Activated naive CD4-positive, alpha-beta T cell treated with anti-CD3 and anti-CD28 coated beads for 36 hours (primary cell): ENCODE measurements at regions of chr19 and their contacts with region 1.

Region 1: GRCh38 chr19:49640113-49640898 is at the start of gene RRAS:
- DNase-seq: peak; percentile 100
- H3K4me3 Mint-ChIP-seq: peak within 1 kb of the TSS; percentile 99
- H3K27ac Mint-ChIP-seq: peak within 1 kb of the TSS; percentile 99
- H3K4me1 Mint-ChIP-seq: peaks cover 43% of the 10 kb centered on the region
- H3K27me3 Mint-ChIP-seq: no peaks in the 10 kb centered on the region
- total RNA-seq, gene RRAS: 7.2 to 7.8 TPM

Region 2: GRCh38 chr19:48965040-48965805 is 675.1 kb before region 1 on chr19 and contains the start of gene FTL:
- CTCF ChIA-PET with region 1: no interaction called
- intact Hi-C with region 1: loop called (anchors 1 kb)
- DNase-seq: peak; percentile 93
- H3K4me3 Mint-ChIP-seq: peak within 1 kb of the TSS; percentile 100
- H3K27ac Mint-ChIP-seq: peak within 1 kb of the TSS; percentile 97
- H3K4me1 Mint-ChIP-seq: peaks cover 56% of the 10 kb centered on the region
- H3K27me3 Mint-ChIP-seq: no peaks in the 10 kb centered on the region
- total RNA-seq, gene FTL: 1,093 to 1,120 TPM

Region 3: GRCh38 chr19:49315111-49315510 is 325.2 kb before region 1 on chr19:
- CTCF ChIA-PET with region 1: no interaction called
- intact Hi-C with region 1: no loop called
- DNase-seq: no peak
- H3K4me3 Mint-ChIP-seq: no peak overlapping the region
- H3K27ac Mint-ChIP-seq: no peak overlapping the region
- H3K4me1 Mint-ChIP-seq: peaks cover 9% of the 10 kb centered on the region
- H3K27me3 Mint-ChIP-seq: no peaks in the 10 kb centered on the region

Region 4: GRCh38 chr19:49497047-49497788 is 143.1 kb before region 1 on chr19:
- CTCF ChIA-PET with region 1: no interaction called
- intact Hi-C with region 1: loop called (anchors 1 kb)
- DNase-seq: peak; percentile 79
- H3K4me3 Mint-ChIP-seq: peak overlapping the region; percentile 87
- H3K27ac Mint-ChIP-seq: peak overlapping the region; percentile 96
- H3K4me1 Mint-ChIP-seq: peaks cover 49% of the 10 kb centered on the region
- H3K27me3 Mint-ChIP-seq: no peaks in the 10 kb centered on the region

Region 5: DNA sequence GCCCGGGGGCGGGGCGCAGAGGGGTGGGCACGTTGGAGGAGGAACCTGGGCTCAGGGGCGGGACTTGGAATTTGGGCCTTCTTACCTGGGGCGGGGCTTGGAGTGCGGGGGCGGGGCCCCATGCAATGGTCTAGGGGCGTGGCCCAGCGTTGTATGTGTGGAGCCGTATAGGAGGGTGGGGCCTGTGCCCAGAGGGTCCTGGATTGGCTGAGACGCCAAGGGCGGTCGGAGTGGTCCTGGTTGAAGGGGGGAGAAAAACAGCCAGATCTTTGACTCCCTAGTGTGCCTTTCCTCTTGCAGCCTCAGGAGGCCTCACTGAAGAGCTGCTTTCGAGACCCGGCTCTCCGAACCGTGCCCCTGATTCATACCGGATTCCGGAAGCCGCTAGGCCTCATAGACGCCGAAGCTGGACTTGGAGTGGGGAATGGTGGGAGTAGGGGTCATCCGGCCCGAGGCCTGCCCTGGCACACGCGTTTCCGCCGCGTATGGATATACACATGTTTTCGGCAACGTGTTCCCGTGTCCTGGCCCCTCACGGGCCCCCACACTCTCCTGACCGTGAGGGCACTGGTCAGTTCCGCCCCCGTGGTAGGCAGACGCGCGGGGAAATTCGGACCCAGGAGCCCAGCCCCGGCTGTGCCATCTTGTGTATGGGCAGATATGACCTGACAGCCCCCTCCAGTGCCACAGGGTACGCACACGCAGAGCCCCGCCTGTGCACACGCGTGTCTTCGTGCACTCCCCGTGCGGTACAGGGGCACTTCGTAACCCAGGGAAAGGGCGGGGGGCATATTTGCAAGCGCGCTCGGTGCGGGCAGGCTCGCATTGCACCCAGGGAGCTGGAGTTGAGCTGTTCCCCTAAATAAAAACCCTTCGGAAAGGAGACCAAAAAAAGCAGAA is 50.0 kb before region 1 on chr19:
- CTCF ChIA-PET with region 1: interaction called, 5 read pairs
- intact Hi-C with region 1: loop called (anchors 1 kb)
- DNase-seq: peak; percentile 96
- H3K4me3 Mint-ChIP-seq: peak overlapping the region; percentile 77
- H3K27ac Mint-ChIP-seq: peak overlapping the region; percentile 85
- H3K4me1 Mint-ChIP-seq: peaks cover 25% of the 10 kb centered on the region
- H3K27me3 Mint-ChIP-seq: no peaks in the 10 kb centered on the region

Region 6: GRCh38 chr19:49766007-49766937 is 126.0 kb after region 1 on chr19:
- CTCF ChIA-PET with region 1: no interaction called
- intact Hi-C with region 1: loop called (anchors 1 kb)
- DNase-seq: peak; percentile 100
- H3K4me3 Mint-ChIP-seq: peak overlapping the region; percentile 94
- H3K27ac Mint-ChIP-seq: peak overlapping the region; percentile 92
- H3K4me1 Mint-ChIP-seq: peaks cover 30% of the 10 kb centered on the region
- H3K27me3 Mint-ChIP-seq: no peaks in the 10 kb centered on the region

Region 7: DNA sequence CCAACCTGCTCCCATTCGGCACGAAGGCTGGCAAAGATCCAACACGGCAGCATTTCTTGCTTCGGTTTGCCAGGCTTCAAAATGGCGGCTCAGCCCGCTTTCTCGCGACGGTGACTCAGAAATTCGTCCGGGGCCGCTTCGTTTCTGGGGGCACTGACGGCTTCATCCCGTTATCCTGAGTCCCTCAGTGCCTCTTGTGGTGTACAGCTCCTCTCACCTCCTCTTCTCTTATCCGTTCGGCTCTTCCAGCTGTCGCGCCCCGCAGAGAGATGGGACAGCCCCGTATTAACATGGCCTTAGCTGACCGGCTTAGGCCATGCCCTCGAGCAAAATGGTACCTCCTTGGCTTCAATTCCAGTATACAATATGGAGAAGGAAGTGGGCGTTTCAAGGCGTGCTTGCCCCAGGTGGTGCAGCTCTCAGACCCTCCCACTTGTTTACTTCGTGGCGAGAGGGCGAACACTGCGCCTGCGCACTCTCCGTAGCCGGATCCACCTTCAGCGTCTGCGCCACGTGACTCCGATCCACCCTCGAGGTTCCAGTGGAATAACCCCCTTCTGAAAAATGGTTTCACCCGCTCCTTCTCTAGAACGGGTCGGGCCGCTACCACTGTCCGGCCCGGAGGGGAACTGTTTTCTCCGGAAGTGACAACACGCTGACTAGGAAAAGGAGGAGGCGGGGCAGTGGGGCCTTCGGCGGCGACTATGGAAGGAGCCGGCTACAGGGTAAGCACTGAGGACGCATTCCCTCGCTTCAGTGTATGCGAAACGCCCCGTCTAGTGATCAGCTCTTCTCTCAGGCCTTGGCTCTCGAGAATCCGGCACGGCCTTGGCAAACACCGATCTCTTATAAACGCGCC is 236.9 kb after region 1 on chr19 and contains the starts of genes AKT1S1 and TBC1D17:
- CTCF ChIA-PET with region 1: no interaction called
- intact Hi-C with region 1: loop called (anchors 1 kb)
- DNase-seq: peak; percentile 99
- H3K4me3 Mint-ChIP-seq: no peak within 1 kb of the TSS
- H3K27ac Mint-ChIP-seq: no peak within 1 kb of the TSS
- H3K4me1 Mint-ChIP-seq: peaks cover 28% of the 10 kb centered on the region
- H3K27me3 Mint-ChIP-seq: no peaks in the 10 kb centered on the region
- total RNA-seq, gene AKT1S1: 13.3 to 14.2 TPM
- total RNA-seq, gene TBC1D17: 29.8 to 32.4 TPM

Region 8: DNA sequence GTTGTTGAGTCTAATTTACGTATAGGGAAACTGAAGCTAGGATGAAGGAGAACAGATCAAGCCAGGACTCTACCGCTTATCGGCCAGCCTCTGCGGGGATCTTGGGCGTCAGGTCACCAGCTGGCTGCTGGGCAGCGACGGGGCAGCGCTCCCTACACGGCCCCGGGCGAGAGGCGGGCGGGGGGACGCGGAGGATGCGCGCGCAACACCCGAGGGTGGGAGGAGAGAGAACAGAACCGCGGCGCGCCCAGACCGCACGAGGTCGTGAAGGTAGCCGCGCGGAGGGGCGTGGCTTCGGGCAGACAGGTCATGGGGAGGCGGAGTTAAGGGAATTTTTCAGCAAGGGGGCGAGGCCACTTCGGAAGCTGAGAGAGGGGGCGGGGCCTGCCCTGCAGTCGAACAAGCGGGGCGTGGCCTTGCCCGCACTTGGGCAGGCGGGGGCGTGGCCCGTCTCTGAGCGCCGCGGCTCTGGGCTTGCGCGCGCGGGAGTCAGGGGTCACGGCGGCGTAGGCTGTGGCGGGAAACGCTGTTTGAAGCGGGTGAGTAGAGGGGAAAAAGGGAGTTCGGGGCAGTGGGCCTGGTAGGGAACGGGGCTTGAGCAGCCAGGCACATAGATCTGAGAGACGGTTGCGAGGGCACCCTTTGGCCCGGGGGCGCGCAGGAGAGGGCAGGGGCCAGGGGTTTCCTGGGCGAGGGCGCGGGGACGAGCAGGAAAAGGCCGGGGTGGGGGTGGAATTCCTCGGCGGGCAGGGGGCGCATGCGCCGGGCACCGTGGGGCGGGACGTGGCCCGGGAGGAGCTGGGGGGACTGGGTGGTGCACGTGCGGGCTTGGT is 743.8 kb after region 1 on chr19 and contains the start of gene POLD1:
- CTCF ChIA-PET with region 1: no interaction called
- intact Hi-C with region 1: loop called (anchors 2 kb)
- DNase-seq: peak; percentile 99
- H3K4me3 Mint-ChIP-seq: peak within 1 kb of the TSS; percentile 98
- H3K27ac Mint-ChIP-seq: peak within 1 kb of the TSS; percentile 95
- H3K4me1 Mint-ChIP-seq: peaks cover 36% of the 10 kb centered on the region
- H3K27me3 Mint-ChIP-seq: no peaks in the 10 kb centered on the region
- total RNA-seq, gene POLD1: 221 to 224 TPM